Endothelial cell of umbilical vein (primary cell): ENCODE measurements at regions of chr9 and their contacts with region 1.

Region 1: GRCh38 chr9:69385581-69386033 is 60.6 kb downstream of the ENTREP1 start:
- DNase-seq: peak; percentile 90
- H3K4me3 ChIP-seq: no peak overlapping the region
- H3K27ac ChIP-seq: no peak overlapping the region
- H3K4me1 ChIP-seq: no peaks in the 10 kb centered on the region
- H3K27me3 ChIP-seq: no peaks in the 10 kb centered on the region
- CTCF ChIP-seq: no peak
- POLR2A ChIP-seq: no peak

Region 2: DNA sequence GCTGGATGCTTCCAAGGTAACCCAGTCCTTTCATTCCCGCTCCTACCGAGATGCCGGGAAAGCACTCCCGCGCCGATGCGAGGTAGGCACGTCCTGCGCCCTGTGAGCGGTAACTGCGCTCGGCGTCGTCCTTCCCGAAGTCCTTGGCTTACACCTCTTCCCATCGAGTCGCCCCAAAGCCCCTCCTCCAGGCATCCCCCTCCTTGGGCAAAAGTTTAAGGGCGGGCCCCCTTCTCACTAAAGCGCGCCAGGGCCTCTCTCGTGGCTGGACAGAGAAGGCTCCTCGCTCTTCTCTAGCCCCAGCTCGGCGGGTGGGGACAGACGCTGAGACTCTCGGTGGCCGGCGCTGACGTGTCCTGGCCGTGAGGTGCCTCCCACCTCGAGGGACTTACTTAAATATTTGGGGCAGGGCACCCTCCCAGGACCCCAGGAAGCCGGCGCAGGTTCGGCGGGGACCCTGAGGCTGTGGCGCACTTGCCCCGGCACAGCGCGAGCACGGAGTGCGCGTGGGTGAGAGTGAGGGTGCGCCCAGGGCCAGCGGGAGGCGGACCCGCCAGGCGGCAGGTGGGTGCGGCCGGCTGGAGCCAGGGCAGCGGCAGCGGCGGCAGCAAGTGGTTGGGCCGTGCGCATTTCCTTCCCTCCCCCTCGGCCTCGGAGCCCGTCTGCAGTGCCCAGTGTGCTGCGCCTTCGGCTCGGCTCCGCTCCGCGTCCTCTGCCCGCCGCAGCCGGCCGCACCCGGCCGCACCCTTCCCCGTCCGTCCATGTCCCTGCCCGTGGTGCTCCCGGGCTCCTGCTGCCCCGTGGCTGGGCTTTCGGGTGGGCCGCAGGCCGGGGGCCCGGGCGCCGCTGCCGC is 60.8 kb before region 1 on chr9 and contains the start of gene ENTREP1:
- CTCF ChIA-PET with region 1: no interaction called
- POLR2A ChIA-PET with region 1: no interaction called
- dilution Hi-C with region 1: no loop called
- intact Hi-C with region 1: loop called (anchors 5 kb)
- DNase-seq: peak; percentile 62
- H3K4me3 ChIP-seq: peak within 1 kb of the TSS; percentile 13 to 55 (median 43)
- H3K27ac ChIP-seq: no peak within 1 kb of the TSS
- H3K4me1 ChIP-seq: peaks cover 11% of the 10 kb centered on the region
- H3K27me3 ChIP-seq: peaks cover 3 to 21% of the 10 kb centered on the region in 2 experiments
- CTCF ChIP-seq: peak in 1 of 2 donors; percentile 19
- POLR2A ChIP-seq: no peak
- total RNA-seq, gene ENTREP1: 5.0 and 7.1 TPM in 2 replicates